A673 (cell line): ENCODE measurements at regions of chr11 and their contacts with region 1.

Region 1: DNA sequence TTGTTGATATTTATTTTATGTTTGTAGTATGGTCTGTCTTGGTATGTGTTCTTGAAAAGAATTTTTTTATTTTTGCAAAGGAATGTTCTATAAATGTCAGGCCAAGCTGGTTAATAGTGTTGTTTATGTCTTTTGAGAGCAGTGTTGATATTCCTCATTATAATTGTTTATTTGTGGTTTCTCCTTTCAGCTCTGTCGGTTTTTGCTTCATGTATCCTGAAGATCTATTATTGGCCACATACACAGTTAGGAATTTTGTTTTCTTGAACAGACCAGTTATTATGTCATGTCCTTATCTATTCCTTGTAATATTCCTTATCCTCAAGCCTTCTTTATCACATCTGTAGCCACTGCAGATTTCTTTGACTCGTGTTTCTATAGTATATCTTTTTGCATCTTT is 56.5 kb downstream of the PDHX start:
- DNase-seq: no peak
- H3K4me3 ChIP-seq: no peak overlapping the region
- H3K27ac ChIP-seq: no peak overlapping the region
- H3K4me1 ChIP-seq: peaks cover 28% of the 10 kb centered on the region
- H3K27me3 ChIP-seq: no peaks in the 10 kb centered on the region
- CTCF ChIP-seq: no peak

Region 2: GRCh38 chr11:35146074-35146521 is 173.2 kb after region 1 on chr11:
- CTCF ChIA-PET with region 1: no interaction called
- POLR2A ChIA-PET with region 1: interaction called, 14 read pairs
- intact Hi-C with region 1: no loop called
- DNase-seq: no peak
- H3K4me3 ChIP-seq: no peak overlapping the region
- H3K27ac ChIP-seq: no peak overlapping the region
- H3K4me1 ChIP-seq: peaks cover 13% of the 10 kb centered on the region
- H3K27me3 ChIP-seq: peaks cover 6% of the 10 kb centered on the region
- CTCF ChIP-seq: no peak